Naive thymus-derived CD8-positive, alpha-beta T cell (primary cell): ENCODE measurements at regions of chr22 and their contacts with region 1.

Region 1: GRCh38 chr22:31080848-31081649 is at the start of gene SMTN:
- DNase-seq: peak; percentile 79 to 91 (median 88)
- ATAC-seq: peak; percentile 70 to 72
- H3K4me3 Mint-ChIP-seq: peak within 1 kb of the TSS; percentile 85 to 95 (median 90)
- H3K27ac Mint-ChIP-seq: peak within 1 kb of the TSS; percentile 21 to 92 (median 82)
- H3K4me1 Mint-ChIP-seq: peaks cover 19 to 46% (median 38%) of the 10 kb centered on the region in 4 donors
- H3K27me3 Mint-ChIP-seq: no peaks in the 10 kb centered on the region
- polyA plus RNA-seq, gene SMTN: 1.1 to 1.8 TPM in 2 of 3 donors, not detected in the other

Region 2: GRCh38 chr22:30920407-30920806 is 160.6 kb before region 1 on chr22:
- POLR2A ChIA-PET with region 1: interaction called, 14 read pairs
- DNase-seq: peak; percentile 69 to 92 (median 82)
- ATAC-seq: peak; percentile 74 to 80
- H3K4me3 Mint-ChIP-seq: peak overlapping the region; percentile 62 to 86 (median 83)
- H3K27ac Mint-ChIP-seq: peak overlapping the region in 9 of 10 donors; percentile 0 to 80 (median 36)
- H3K4me1 Mint-ChIP-seq: peaks cover 7 to 25% (median 15%) of the 10 kb centered on the region in 4 donors
- H3K27me3 Mint-ChIP-seq: peaks cover 0 to 2% (median 0%) of the 10 kb centered on the region in 5 donors

Region 3: GRCh38 chr22:30940685-30941362 is 140.2 kb before region 1 on chr22:
- POLR2A ChIA-PET with region 1: interaction called, 35 read pairs
- DNase-seq: peak; percentile 16 to 77 (median 46)
- ATAC-seq: peak; percentile 73 to 79
- H3K4me3 Mint-ChIP-seq: peak overlapping the region; percentile 81 to 92 (median 86)
- H3K27ac Mint-ChIP-seq: peak overlapping the region; percentile 93 to 98 (median 96)
- H3K4me1 Mint-ChIP-seq: peaks cover 38 to 92% (median 87%) of the 10 kb centered on the region in 4 donors
- H3K27me3 Mint-ChIP-seq: no peaks in the 10 kb centered on the region

Region 4: GRCh38 chr22:30947816-30948454 is 133.1 kb before region 1 on chr22:
- POLR2A ChIA-PET with region 1: interaction called, 35 read pairs
- DNase-seq: peak in 3 of 10 donors; percentile 49 to 64 (median 61)
- ATAC-seq: peak; percentile 41 to 47
- H3K4me3 Mint-ChIP-seq: no peak overlapping the region
- H3K27ac Mint-ChIP-seq: no peak overlapping the region
- H3K4me1 Mint-ChIP-seq: peaks cover 48 to 66% (median 60%) of the 10 kb centered on the region in 4 donors
- H3K27me3 Mint-ChIP-seq: no peaks in the 10 kb centered on the region

Region 5: DNA sequence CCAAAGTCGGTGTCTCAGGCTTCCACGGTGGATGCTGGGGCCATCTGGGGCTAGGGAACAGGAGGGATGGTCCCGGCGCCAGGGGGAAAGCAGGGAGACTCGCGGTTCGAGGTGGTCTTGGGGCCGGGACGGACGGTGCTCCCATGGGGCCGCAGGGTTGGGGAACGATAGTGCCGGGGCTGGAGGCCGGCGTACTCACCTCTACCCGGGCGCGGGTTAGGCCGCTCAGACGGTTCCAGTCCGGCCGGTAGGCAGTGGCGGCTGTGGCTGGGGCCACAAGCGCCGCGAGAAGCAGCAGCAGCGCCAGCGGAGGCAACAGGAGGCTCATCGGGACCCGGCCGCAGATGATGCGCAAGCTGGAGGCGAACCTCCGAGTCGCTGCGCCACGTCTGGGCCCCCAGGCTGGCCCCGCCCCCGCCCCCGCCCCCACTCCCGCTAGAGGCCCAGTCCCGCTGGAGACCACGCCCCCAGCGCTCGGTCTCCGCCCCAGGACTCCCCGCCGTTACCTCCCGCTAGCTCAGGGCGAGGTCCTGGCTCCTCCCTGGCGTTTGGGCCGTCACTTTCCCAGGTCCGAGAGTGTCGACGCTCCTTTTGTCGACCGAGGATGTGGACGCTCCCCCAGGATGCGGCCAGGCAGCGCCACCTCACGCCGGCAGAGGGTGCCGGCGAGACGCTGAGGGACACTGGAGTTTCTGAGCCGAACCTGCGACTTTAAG is 26.3 kb after region 1 on chr22 and contains the start of gene SELENOM:
- POLR2A ChIA-PET with region 1: interaction called, 10 read pairs
- DNase-seq: peak; percentile 77 to 92 (median 84)
- ATAC-seq: peak; percentile 89 to 90
- H3K4me3 Mint-ChIP-seq: peak within 1 kb of the TSS; percentile 90 to 97 (median 95)
- H3K27ac Mint-ChIP-seq: peak within 1 kb of the TSS; percentile 86 to 97 (median 94)
- H3K4me1 Mint-ChIP-seq: peaks cover 18 to 27% (median 21%) of the 10 kb centered on the region in 4 donors
- H3K27me3 Mint-ChIP-seq: no peaks in the 10 kb centered on the region
- polyA plus RNA-seq, gene SELENOM: 114 to 142 (median 134) TPM